ENCODE measurements at regions of chr18 and their contacts with region 1.

Region 1: GRCh38 chr18:35005963-35006577 is 35.1 kb upstream of the MAPRE2 start:
- DNase-seq: peak; percentile 67
- CTCF ChIP-seq: peak; percentile 29

Region 2: GRCh38 chr18:35143622-35144596 is 137.8 kb after region 1 on chr18:
- in situ Hi-C with region 1: loop called (anchors 10 kb)
- DNase-seq: peak; percentile 45
- CTCF ChIP-seq: peak; percentile 27

Region 3: GRCh38 chr18:35355140-35355618 is 349.1 kb after region 1 on chr18:
- in situ Hi-C with region 1: loop called (anchors 10 kb)
- DNase-seq: peak; percentile 52
- CTCF ChIP-seq: peak; percentile 56

Measured in GM13976 (cell line).